GM12878 (cell line): ENCODE measurements at regions of chr3 and their contacts with region 1.

Region 1: DNA sequence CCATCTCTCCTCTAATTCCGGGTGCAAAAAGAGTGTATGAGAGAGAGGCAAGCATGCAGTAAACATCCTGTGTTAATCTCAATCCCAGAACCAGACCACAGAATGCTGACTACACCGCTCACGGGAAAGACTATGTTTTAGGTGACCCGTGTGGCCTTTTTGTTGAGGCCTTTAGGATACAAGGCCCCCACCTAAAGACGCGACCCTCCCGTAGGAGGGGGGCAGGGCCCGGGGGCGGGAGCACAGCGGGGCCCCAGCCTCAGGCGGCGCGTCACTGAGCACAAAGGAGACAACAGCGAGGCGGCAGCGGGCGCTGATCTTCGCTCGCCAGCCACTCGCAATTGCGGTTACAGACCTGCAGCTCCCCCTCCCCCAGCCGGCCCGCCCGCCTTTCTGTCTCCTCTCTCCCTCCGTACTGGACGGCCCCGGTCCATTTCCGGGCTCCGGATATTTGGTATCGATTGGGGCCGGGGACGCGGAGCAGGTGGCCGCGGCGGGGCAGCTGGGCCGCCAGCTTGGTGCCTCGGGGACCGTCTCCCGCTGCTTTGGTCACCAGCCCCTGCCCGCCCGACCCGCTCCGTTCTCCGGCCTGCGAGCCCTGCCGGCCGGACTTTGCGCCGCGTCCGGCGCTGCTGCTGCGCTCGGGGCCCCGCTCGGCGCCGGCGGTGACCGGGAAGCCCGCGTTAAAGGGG is at the start of gene CCDC50:
- DNase-seq: no peak
- ATAC-seq: peak; percentile 74
- H3K4me3 ChIP-seq: peak within 1 kb of the TSS; percentile 73
- H3K27ac ChIP-seq: peak within 1 kb of the TSS; percentile 78
- H3K4me1 ChIP-seq: peaks cover 15% of the 10 kb centered on the region
- H3K27me3 ChIP-seq: no peaks in the 10 kb centered on the region
- CTCF ChIP-seq: no peak
- EP300 ChIP-seq: peak; percentile 46 to 50; a peak in 3 of 4 replicates
- POLR2A ChIP-seq: peak; percentile 86
- RAD21 ChIP-seq: no peak
- polyA plus RNA-seq, gene CCDC50: 46.7 to 61.5 TPM

Region 2: GRCh38 chr3:191136347-191136746 is 192.8 kb before region 1 on chr3:
- CTCF ChIA-PET with region 1: interaction called, 3 read pairs
- POLR2A ChIA-PET with region 1: no interaction called
- RAD21 ChIA-PET with region 1: no interaction called
- SMC1A ChIA-PET with region 1: no interaction called
- in situ Hi-C with region 1: no loop called
- intact Hi-C with region 1: loop called (anchors 5 kb)
- DNase-seq: no peak
- ATAC-seq: peak; percentile 70
- H3K4me3 ChIP-seq: no peak overlapping the region
- H3K27ac ChIP-seq: no peak overlapping the region
- H3K4me1 ChIP-seq: peaks cover 24% of the 10 kb centered on the region
- H3K27me3 ChIP-seq: no peaks in the 10 kb centered on the region
- CTCF ChIP-seq: peak; percentile 43 to 51 (median 46); a peak in 4 of 6 replicates
- EP300 ChIP-seq: no peak
- POLR2A ChIP-seq: no peak
- RAD21 ChIP-seq: peak; percentile 76

Region 3: GRCh38 chr3:191263365-191263764 is 65.7 kb before region 1 on chr3:
- CTCF ChIA-PET with region 1: interaction called, 3 read pairs
- POLR2A ChIA-PET with region 1: interaction called, 3 read pairs
- RAD21 ChIA-PET with region 1: interaction called, 7 read pairs
- SMC1A ChIA-PET with region 1: interaction called, 39 read pairs
- in situ Hi-C with region 1: no loop called
- intact Hi-C with region 1: no loop called
- DNase-seq: no peak
- ATAC-seq: peak; percentile 98
- H3K4me3 ChIP-seq: peak overlapping the region; percentile 10; the same call in 1 of the 2 replicates
- H3K27ac ChIP-seq: peak overlapping the region; percentile 40
- H3K4me1 ChIP-seq: peaks cover 8% of the 10 kb centered on the region; the same call in 1 of the 2 replicates
- H3K27me3 ChIP-seq: no peaks in the 10 kb centered on the region
- CTCF ChIP-seq: no peak
- EP300 ChIP-seq: no peak
- POLR2A ChIP-seq: no peak
- RAD21 ChIP-seq: no peak

Region 4: DNA sequence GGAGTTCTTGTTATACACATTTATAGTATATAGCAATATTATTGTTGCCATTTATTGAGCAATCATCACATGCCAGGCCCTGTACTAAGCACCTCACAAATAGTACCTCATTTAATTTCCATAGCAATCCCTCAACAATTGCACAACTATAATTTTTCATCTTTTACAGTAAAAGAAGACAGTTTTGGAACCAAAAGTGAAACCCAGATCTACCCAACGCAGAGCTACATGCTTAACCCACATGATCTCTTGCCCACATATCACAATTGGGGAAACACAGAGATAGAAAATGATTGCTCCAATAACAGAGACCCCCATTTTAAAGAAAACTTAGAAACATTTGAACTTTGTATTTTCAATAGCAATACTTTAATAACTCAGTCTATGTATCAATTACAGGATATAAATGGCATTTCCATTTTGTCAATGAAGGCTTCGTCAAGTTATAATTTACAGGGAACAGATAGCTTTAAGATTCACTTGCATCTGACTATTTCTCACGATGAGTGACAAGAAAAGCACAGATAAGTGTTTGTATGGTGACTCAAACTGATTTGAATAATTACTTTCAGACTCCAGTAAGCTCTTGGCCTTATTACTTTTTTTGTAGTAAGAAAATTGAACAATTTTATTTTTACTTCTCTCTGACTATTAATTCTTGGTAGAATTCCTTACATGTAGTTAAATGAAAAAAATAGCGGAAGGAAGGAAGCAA is 38.6 kb before region 1 on chr3:
- CTCF ChIA-PET with region 1: interaction called, 4 read pairs
- POLR2A ChIA-PET with region 1: interaction called, 3 read pairs
- RAD21 ChIA-PET with region 1: interaction called, 12 read pairs
- SMC1A ChIA-PET with region 1: interaction called, 11 read pairs
- in situ Hi-C with region 1: no loop called
- intact Hi-C with region 1: no loop called
- DNase-seq: no peak
- ATAC-seq: peak; percentile 93
- H3K4me3 ChIP-seq: no peak overlapping the region
- H3K27ac ChIP-seq: peak overlapping the region; percentile 68
- H3K4me1 ChIP-seq: peaks cover 13% of the 10 kb centered on the region
- H3K27me3 ChIP-seq: no peaks in the 10 kb centered on the region
- CTCF ChIP-seq: no peak
- EP300 ChIP-seq: no peak
- POLR2A ChIP-seq: no peak
- RAD21 ChIP-seq: no peak

Region 5: GRCh38 chr3:191296041-191296541 is 33.0 kb before region 1 on chr3:
- CTCF ChIA-PET with region 1: interaction called, 4 read pairs
- POLR2A ChIA-PET with region 1: interaction called, 5 read pairs
- RAD21 ChIA-PET with region 1: interaction called, 12 read pairs
- SMC1A ChIA-PET with region 1: interaction called, 30 read pairs
- in situ Hi-C with region 1: no loop called
- intact Hi-C with region 1: loop called (anchors 2 kb)
- DNase-seq: peak; percentile 88
- ATAC-seq: peak; percentile 80
- H3K4me3 ChIP-seq: no peak overlapping the region
- H3K27ac ChIP-seq: peak overlapping the region; percentile 5; the same call in 1 of the 2 replicates
- H3K4me1 ChIP-seq: peaks cover 46% of the 10 kb centered on the region
- H3K27me3 ChIP-seq: no peaks in the 10 kb centered on the region
- CTCF ChIP-seq: no peak
- EP300 ChIP-seq: peak; percentile 88 to 98
- POLR2A ChIP-seq: no peak
- RAD21 ChIP-seq: no peak

Region 6: DNA sequence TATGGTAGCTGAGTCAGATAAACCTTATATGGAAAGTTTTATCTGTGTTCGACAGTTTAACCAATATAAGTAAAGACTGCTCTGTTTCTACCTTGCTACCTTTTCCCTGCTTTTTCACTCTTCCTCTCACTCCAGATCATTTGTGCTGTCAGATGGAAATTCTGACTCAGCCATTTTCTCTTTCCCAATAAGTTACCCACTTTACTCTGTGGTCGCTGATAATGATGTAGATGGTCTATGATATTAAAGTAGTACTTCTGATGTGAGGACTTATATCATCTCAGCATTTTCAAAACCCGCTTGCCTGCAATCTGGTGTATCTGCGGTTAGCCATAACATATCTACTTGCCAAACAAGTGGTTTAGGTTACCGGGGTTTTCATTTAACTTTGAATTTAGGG is 16.2 kb after region 1 on chr3:
- CTCF ChIA-PET with region 1: interaction called, 3 read pairs
- POLR2A ChIA-PET with region 1: interaction called, 4 read pairs
- RAD21 ChIA-PET with region 1: interaction called, 12 read pairs
- SMC1A ChIA-PET with region 1: interaction called, 22 read pairs
- in situ Hi-C with region 1: no loop called
- intact Hi-C with region 1: no loop called
- DNase-seq: no peak
- ATAC-seq: no peak
- H3K4me3 ChIP-seq: no peak overlapping the region
- H3K27ac ChIP-seq: no peak overlapping the region
- H3K4me1 ChIP-seq: no peaks in the 10 kb centered on the region; the same call in 1 of the 2 replicates
- H3K27me3 ChIP-seq: no peaks in the 10 kb centered on the region
- CTCF ChIP-seq: no peak
- EP300 ChIP-seq: no peak
- POLR2A ChIP-seq: no peak
- RAD21 ChIP-seq: no peak

Region 7: DNA sequence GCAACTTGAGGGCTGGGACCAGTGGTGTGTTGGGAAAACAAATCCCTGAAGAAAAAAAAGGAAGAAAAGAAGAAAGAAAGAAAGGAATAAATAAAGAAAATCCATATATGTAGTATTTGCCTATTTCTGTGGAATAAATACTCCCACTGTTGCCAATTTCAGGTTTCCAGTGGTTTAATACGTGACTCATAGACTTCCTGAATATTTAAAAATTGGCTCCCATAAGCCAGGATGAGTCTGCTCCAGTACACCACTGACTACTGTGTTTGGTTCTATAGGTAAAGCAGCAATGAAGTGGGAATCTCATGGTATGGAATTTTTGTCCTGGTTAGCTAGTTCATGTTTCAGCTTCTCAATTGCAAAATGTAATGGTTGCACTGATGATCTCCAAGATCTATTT is 163.5 kb after region 1 on chr3:
- CTCF ChIA-PET with region 1: no interaction called
- POLR2A ChIA-PET with region 1: no interaction called
- RAD21 ChIA-PET with region 1: no interaction called
- SMC1A ChIA-PET with region 1: no interaction called
- in situ Hi-C with region 1: no loop called
- intact Hi-C with region 1: no loop called
- DNase-seq: no peak
- ATAC-seq: no peak
- H3K4me3 ChIP-seq: no peak overlapping the region
- H3K27ac ChIP-seq: no peak overlapping the region
- H3K4me1 ChIP-seq: no peaks in the 10 kb centered on the region
- H3K27me3 ChIP-seq: no peaks in the 10 kb centered on the region
- CTCF ChIP-seq: no peak
- EP300 ChIP-seq: no peak
- POLR2A ChIP-seq: no peak
- RAD21 ChIP-seq: no peak